A673 (cell line): ENCODE measurements at regions of chr2 and their contacts with region 1.

Region 1: DNA sequence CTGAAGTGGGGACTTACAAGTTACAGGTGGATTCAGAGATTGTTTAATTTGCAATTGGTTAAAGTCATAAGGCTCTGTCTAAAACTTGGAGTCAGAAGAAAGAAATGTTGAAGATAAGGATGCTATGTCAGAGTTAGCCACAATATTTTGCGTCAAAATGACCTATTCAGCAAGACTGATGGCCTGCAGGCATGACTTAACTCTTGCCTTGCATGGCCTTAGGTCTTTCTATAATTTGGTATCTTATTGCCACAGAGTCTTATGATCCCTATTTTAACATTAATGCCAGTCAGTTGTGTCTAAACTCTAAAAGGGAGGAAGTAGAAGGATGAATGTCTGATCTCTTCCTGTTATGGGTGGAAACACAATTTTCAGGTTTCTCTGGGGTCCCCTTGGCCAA is 5.2 kb upstream of the COMMD1 start:
- DNase-seq: no peak
- H3K4me3 ChIP-seq: no peak overlapping the region
- H3K27ac ChIP-seq: no peak overlapping the region
- H3K4me1 ChIP-seq: no peaks in the 10 kb centered on the region
- H3K27me3 ChIP-seq: no peaks in the 10 kb centered on the region
- CTCF ChIP-seq: no peak

Region 2: DNA sequence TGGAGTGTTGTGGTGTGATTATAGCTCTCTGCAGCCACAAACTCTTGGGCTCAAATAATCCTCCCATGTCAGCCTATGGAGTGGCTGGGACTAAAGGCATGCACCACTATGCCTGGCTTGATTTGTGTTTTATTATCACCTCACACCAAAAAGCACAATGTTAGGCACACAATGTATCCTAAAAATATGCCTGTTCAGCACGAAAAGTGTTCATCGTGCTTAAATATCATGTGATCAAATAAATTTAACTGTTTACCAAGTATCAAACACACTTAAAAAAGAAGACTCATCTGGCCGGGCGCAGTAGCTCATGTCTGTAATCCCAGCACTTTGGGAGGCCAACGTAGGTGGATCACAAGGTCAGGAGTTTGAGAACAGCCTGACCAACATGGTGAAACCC is 17.4 kb before region 1 on chr2:
- CTCF ChIA-PET with region 1: interaction called, 16 read pairs
- POLR2A ChIA-PET with region 1: no interaction called
- intact Hi-C with region 1: no loop called
- DNase-seq: no peak
- H3K4me3 ChIP-seq: no peak overlapping the region
- H3K27ac ChIP-seq: no peak overlapping the region
- H3K4me1 ChIP-seq: peaks cover 9% of the 10 kb centered on the region
- H3K27me3 ChIP-seq: no peaks in the 10 kb centered on the region
- CTCF ChIP-seq: no peak